CD8-positive, alpha-beta memory T cell (primary cell): ENCODE measurements at regions of chr3 and their contacts with region 1.

Region 1: GRCh38 chr3:115169808-115170207 is 22.7 kb upstream of the ZBTB20 start:
- DNase-seq: peak in 2 of 5 donors; percentile 15 to 20
- H3K4me3 ChIP-seq: no peak overlapping the region
- H3K4me3 Mint-ChIP-seq: no peak overlapping the region
- H3K27ac ChIP-seq: no peak overlapping the region
- H3K27ac Mint-ChIP-seq: no peak overlapping the region
- H3K4me1 ChIP-seq: peaks cover 13% of the 10 kb centered on the region
- H3K4me1 Mint-ChIP-seq: peaks cover 11 to 26% (median 13%) of the 10 kb centered on the region in 3 donors
- H3K27me3 ChIP-seq: no peaks in the 10 kb centered on the region
- H3K27me3 Mint-ChIP-seq: no peaks in the 10 kb centered on the region

Region 2: DNA sequence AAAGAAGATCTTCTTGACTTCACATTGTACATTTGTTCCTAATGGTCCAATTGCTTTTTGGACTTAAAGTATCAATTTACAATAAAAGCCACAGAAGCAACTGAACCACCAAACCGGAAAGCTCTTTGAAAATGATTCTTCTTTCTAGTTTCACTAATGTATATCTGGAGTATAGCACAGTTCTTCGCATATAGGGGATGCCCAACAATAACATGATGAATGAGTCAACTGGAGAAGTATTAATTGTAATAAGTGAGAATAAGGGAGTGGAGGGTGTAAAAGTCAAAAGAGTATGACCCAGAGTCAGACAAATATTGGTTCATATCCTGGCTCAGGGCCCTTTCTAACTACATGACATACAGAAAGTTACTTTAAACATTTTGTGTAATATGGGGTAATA is 447.9 kb before region 1 on chr3:
- CTCF ChIA-PET with region 1: no interaction called
- POLR2A ChIA-PET with region 1: no interaction called
- DNase-seq: no peak
- H3K4me3 ChIP-seq: no peak overlapping the region
- H3K4me3 Mint-ChIP-seq: peak overlapping the region in 4 of 7 donors; percentile 2 to 37 (median 14)
- H3K27ac ChIP-seq: no peak overlapping the region
- H3K27ac Mint-ChIP-seq: peak overlapping the region in 1 of 8 donors; percentile 52
- H3K4me1 ChIP-seq: peaks cover 19% of the 10 kb centered on the region
- H3K4me1 Mint-ChIP-seq: peaks cover 24 to 43% (median 39%) of the 10 kb centered on the region in 3 donors
- H3K27me3 ChIP-seq: no peaks in the 10 kb centered on the region
- H3K27me3 Mint-ChIP-seq: no peaks in the 10 kb centered on the region

Region 3: GRCh38 chr3:115092220-115092791 is 77.5 kb before region 1 on chr3:
- CTCF ChIA-PET with region 1: interaction called, 65 read pairs
- POLR2A ChIA-PET with region 1: no interaction called
- DNase-seq: peak; percentile 36 to 70 (median 48)
- H3K4me3 ChIP-seq: no peak overlapping the region
- H3K4me3 Mint-ChIP-seq: no peak overlapping the region
- H3K27ac ChIP-seq: no peak overlapping the region
- H3K27ac Mint-ChIP-seq: peak overlapping the region in 1 of 8 donors; percentile 54
- H3K4me1 ChIP-seq: no peaks in the 10 kb centered on the region
- H3K4me1 Mint-ChIP-seq: peaks cover 4 to 51% (median 26%) of the 10 kb centered on the region in 3 donors
- H3K27me3 ChIP-seq: no peaks in the 10 kb centered on the region
- H3K27me3 Mint-ChIP-seq: no peaks in the 10 kb centered on the region

Region 4: GRCh38 chr3:115147329-115148141 is 22.3 kb before region 1 on chr3:
- CTCF ChIA-PET with region 1: interaction called, 47 read pairs
- POLR2A ChIA-PET with region 1: interaction called, 97 read pairs
- DNase-seq: peak; percentile 94 to 98 (median 97)
- H3K4me3 ChIP-seq: peak overlapping the region; percentile 69
- H3K4me3 Mint-ChIP-seq: peak overlapping the region; percentile 91 to 98 (median 96)
- H3K27ac ChIP-seq: peak overlapping the region; percentile 93
- H3K27ac Mint-ChIP-seq: peak overlapping the region; percentile 92 to 100 (median 99)
- H3K4me1 ChIP-seq: peaks cover 22% of the 10 kb centered on the region
- H3K4me1 Mint-ChIP-seq: peaks cover 25 to 47% (median 32%) of the 10 kb centered on the region in 3 donors
- H3K27me3 ChIP-seq: no peaks in the 10 kb centered on the region
- H3K27me3 Mint-ChIP-seq: no peaks in the 10 kb centered on the region

Region 5: GRCh38 chr3:115475178-115476041 is 305.6 kb after region 1 on chr3:
- CTCF ChIA-PET with region 1: no interaction called
- POLR2A ChIA-PET with region 1: no interaction called
- DNase-seq: no peak
- H3K4me3 ChIP-seq: no peak overlapping the region
- H3K4me3 Mint-ChIP-seq: no peak overlapping the region
- H3K27ac ChIP-seq: no peak overlapping the region
- H3K27ac Mint-ChIP-seq: no peak overlapping the region
- H3K4me1 ChIP-seq: no peaks in the 10 kb centered on the region
- H3K4me1 Mint-ChIP-seq: no peaks in the 10 kb centered on the region
- H3K27me3 ChIP-seq: no peaks in the 10 kb centered on the region
- H3K27me3 Mint-ChIP-seq: peaks cover 7 to 14% of the 10 kb centered on the region in 2 donors

Region 6: GRCh38 chr3:115698851-115699591 is 529.2 kb after region 1 on chr3:
- CTCF ChIA-PET with region 1: no interaction called
- POLR2A ChIA-PET with region 1: no interaction called
- DNase-seq: peak in 1 of 5 donors; percentile 5
- H3K4me3 ChIP-seq: no peak overlapping the region
- H3K4me3 Mint-ChIP-seq: no peak overlapping the region
- H3K27ac ChIP-seq: no peak overlapping the region
- H3K27ac Mint-ChIP-seq: no peak overlapping the region
- H3K4me1 ChIP-seq: no peaks in the 10 kb centered on the region
- H3K4me1 Mint-ChIP-seq: no peaks in the 10 kb centered on the region
- H3K27me3 ChIP-seq: no peaks in the 10 kb centered on the region
- H3K27me3 Mint-ChIP-seq: peaks cover under 1 to 1% of the 10 kb centered on the region in 2 donors